ENCODE measurements at regions of chr16 and their contacts with region 1.

Region 1: GRCh38 chr16:1054660-1055556 is 17.6 kb upstream of the SSTR5 start:
- DNase-seq: no peak

Region 2: DNA sequence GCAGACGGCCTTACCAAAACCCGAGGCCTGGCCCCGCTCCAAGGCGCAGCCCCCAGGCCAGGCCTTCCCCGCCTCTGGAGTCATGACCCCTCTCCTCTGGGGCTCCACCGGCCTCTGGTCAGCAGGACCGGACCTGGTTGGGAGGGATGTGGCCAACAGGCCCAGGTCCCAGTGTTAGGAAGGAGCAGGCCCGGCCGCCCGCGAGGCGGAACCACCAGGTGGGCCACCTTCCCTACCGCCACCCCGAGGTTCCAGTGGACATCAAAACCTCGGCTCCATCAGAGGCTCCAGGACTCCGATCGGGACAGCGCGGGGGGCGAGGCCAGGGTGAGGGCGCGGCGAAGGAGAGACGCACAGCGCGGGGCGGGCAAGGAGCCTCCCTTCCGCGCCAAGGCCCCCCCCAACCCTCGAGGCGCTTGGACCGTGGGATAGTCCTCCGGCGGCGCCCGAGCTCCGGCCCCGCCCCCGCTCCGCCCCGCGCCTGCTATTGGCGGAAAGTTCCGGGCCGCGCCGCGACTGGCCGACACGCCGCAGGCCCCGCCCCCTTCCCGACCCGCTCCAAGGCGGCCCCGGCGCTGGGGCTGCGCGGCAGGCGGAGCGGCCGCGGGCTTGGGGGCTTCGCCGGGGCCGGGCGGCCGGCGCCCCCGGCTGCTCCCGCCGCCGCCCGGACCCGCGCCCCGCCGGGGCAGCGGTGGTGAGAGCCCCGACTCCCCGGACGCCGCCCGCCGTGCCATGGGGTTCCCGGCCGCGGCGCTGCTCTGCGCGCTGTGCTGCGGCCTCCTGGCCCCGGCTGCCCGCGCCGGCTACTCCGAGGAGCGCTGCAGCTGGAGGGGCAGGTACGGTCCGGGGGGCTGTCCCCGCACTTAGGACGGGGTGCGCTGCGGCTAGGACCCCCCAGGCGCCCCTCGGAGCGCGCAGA is 340.1 kb before region 1 on chr16 and contains the start of gene METRN:
- intact Hi-C with region 1: loop called (anchors 5 kb)
- DNase-seq: peak; percentile 94
- total RNA-seq, gene METRN: 73.3 TPM

Region 3: GRCh38 chr16:813204-813915 is 241.5 kb before region 1 on chr16:
- intact Hi-C with region 1: loop called (anchors 1 kb)
- DNase-seq: no peak

Region 4: GRCh38 chr16:840009-840408 is 214.9 kb before region 1 on chr16:
- intact Hi-C with region 1: no loop called
- DNase-seq: no peak

Region 5: GRCh38 chr16:1026057-1026783 is 28.7 kb before region 1 on chr16:
- intact Hi-C with region 1: no loop called
- DNase-seq: no peak

Region 6: GRCh38 chr16:1105888-1106620 is 51.1 kb after region 1 on chr16:
- intact Hi-C with region 1: loop called (anchors 1 kb)
- DNase-seq: no peak

Measured in cardiac septum (tissue), 1 donor.